GM12878 (cell line): ENCODE measurements at regions of chr19 and their contacts with region 1.

Region 1: DNA sequence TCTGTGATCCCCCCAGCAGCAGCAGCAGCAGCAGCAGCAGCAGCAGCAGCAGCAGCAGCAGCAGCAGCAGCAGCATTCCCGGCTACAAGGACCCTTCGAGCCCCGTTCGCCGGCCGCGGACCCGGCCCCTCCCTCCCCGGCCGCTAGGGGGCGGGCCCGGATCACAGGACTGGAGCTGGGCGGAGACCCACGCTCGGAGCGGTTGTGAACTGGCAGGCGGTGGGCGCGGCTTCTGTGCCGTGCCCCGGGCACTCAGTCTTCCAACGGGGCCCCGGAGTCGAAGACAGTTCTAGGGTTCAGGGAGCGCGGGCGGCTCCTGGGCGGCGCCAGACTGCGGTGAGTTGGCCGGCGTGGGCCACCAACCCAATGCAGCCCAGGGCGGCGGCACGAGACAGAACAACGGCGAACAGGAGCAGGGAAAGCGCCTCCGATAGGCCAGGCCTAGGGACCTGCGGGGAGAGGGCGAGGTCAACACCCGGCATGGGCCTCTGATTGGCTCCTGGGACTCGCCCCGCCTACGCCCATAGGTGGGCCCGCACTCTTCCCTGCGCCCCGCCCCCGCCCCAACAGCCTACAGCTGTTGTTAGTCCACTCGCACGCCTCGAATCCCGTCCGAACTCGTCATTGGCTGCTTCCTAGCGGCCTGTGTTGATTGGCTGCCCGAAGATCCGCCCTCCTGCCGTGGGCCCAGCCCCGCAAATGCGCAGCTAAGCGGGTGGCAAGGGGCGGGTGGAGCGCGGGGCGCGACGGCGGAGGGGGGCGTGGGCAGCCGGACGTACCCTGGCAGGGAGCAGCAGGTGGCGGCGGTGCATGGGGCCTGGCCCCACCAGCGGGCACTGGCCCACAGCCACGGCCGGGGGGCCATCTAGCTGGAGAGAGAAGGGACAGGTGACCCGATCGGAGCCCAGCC is 1.4 kb upstream of the SIX5 start:
- DNase-seq: peak; percentile 76
- ATAC-seq: peak; percentile 82
- H3K4me3 ChIP-seq: peak overlapping the region; percentile 78
- H3K27ac ChIP-seq: peak overlapping the region; percentile 67; the same call in 1 of the 2 replicates
- H3K4me1 ChIP-seq: peaks cover 4% of the 10 kb centered on the region
- H3K27me3 ChIP-seq: no peaks in the 10 kb centered on the region
- CTCF ChIP-seq: peak; percentile 86 to 95 (median 94)
- EP300 ChIP-seq: no peak
- POLR2A ChIP-seq: peak; percentile 65; the same call in 1 of the 2 replicates
- RAD21 ChIP-seq: peak; percentile 74

Region 2: GRCh38 chr19:45692187-45693105 is 78.0 kb before region 1 on chr19 and contains the start of gene QPCTL:
- CTCF ChIA-PET with region 1: interaction called, 34 read pairs
- POLR2A ChIA-PET with region 1: interaction called, 28 read pairs
- RAD21 ChIA-PET with region 1: interaction called, 41 read pairs
- SMC1A ChIA-PET with region 1: interaction called, 3 read pairs
- in situ Hi-C with region 1: no loop called
- intact Hi-C with region 1: loop called (anchors 5 kb)
- DNase-seq: peak; percentile 100
- ATAC-seq: peak; percentile 93
- H3K4me3 ChIP-seq: peak within 1 kb of the TSS; percentile 76
- H3K27ac ChIP-seq: peak within 1 kb of the TSS; percentile 82
- H3K4me1 ChIP-seq: peaks cover 10% of the 10 kb centered on the region
- H3K27me3 ChIP-seq: no peaks in the 10 kb centered on the region
- CTCF ChIP-seq: no peak
- EP300 ChIP-seq: peak; percentile 13 to 31; a peak in 1 of 4 replicates
- POLR2A ChIP-seq: peak; percentile 93
- RAD21 ChIP-seq: no peak
- polyA plus RNA-seq, gene QPCTL: 1.1 to 1.7 TPM

Region 3: GRCh38 chr19:45717166-45717982 is 53.1 kb before region 1 on chr19:
- CTCF ChIA-PET with region 1: interaction called, 21 read pairs
- POLR2A ChIA-PET with region 1: interaction called, 22 read pairs
- RAD21 ChIA-PET with region 1: interaction called, 25 read pairs
- SMC1A ChIA-PET with region 1: interaction called, 17 read pairs
- in situ Hi-C with region 1: no loop called
- intact Hi-C with region 1: no loop called
- DNase-seq: peak; percentile 99
- ATAC-seq: peak; percentile 99
- H3K4me3 ChIP-seq: peak overlapping the region; percentile 95
- H3K27ac ChIP-seq: peak overlapping the region; percentile 97
- H3K4me1 ChIP-seq: peaks cover 13% of the 10 kb centered on the region
- H3K27me3 ChIP-seq: no peaks in the 10 kb centered on the region
- CTCF ChIP-seq: peak; percentile 21 to 31 (median 25); a peak in 4 of 6 replicates
- EP300 ChIP-seq: peak in 1 of 2 experiments; percentile 51; a peak in 2 of 4 replicates
- POLR2A ChIP-seq: peak; percentile 70
- RAD21 ChIP-seq: no peak

Region 4: DNA sequence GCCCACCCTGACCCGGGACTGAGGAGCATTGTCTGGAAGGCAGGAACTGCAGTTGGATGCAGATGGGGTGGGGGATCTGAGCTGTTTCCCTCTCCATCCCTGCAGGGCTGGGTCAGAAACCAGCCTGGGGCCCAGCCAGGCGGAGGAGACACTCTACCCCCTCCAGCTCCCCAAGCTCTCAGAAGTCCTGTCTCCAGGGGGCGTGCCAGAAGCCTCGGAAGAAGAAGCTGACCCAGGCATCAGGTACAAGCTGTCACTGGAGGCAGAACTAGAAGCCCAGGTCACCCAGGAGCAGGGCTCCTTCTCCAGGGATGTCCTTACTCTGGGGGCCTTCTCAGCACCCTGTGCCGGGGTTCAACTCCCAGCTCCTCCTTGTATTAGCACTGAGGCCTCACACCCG is 16.9 kb before region 1 on chr19:
- CTCF ChIA-PET with region 1: interaction called, 17 read pairs
- POLR2A ChIA-PET with region 1: interaction called, 7 read pairs
- RAD21 ChIA-PET with region 1: interaction called, 9 read pairs
- SMC1A ChIA-PET with region 1: interaction called, 4 read pairs
- in situ Hi-C with region 1: no loop called
- intact Hi-C with region 1: no loop called
- DNase-seq: no peak
- ATAC-seq: peak; percentile 75
- H3K4me3 ChIP-seq: no peak overlapping the region
- H3K27ac ChIP-seq: no peak overlapping the region
- H3K4me1 ChIP-seq: no peaks in the 10 kb centered on the region
- H3K27me3 ChIP-seq: no peaks in the 10 kb centered on the region
- CTCF ChIP-seq: 0 out of 6 replicates have a peak, but pooled peaks of 2 of the 3 experiments have one; percentile 8 to 11
- EP300 ChIP-seq: no peak
- POLR2A ChIP-seq: no peak
- RAD21 ChIP-seq: no peak

Region 5: DNA sequence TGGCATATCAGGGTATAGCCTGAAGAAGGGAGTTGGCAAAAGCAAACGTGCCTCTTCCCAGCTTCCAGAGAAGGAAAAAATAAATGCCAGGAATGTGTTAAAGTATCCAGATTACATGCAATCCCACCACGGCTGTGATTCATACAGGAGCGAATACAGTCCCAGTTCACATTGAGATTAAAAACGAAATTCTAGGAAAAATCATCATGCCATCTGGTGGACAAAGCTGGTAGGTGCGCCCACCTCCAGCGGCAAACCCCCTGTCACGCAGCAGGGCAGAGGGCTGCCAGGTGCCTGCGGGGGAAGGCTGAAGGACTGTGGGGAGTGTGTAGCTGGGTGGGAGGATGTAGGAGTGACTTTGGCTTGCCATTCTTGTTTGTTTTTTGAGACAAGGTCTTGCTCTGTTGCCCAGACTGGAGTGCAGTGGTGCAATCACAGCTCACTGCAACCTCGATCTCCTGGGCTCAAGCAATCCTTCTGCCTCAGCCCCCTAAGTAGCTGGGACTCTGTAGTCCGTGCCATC is 28.6 kb after region 1 on chr19:
- CTCF ChIA-PET with region 1: interaction called, 110 read pairs
- POLR2A ChIA-PET with region 1: interaction called, 9 read pairs
- RAD21 ChIA-PET with region 1: interaction called, 63 read pairs
- SMC1A ChIA-PET with region 1: interaction called, 24 read pairs
- in situ Hi-C with region 1: no loop called
- intact Hi-C with region 1: loop called (anchors 2 kb)
- DNase-seq: peak; percentile 23
- ATAC-seq: peak; percentile 93
- H3K4me3 ChIP-seq: no peak overlapping the region
- H3K27ac ChIP-seq: no peak overlapping the region
- H3K4me1 ChIP-seq: peaks cover 8% of the 10 kb centered on the region
- H3K27me3 ChIP-seq: no peaks in the 10 kb centered on the region
- CTCF ChIP-seq: peak; percentile 75 to 91 (median 85)
- EP300 ChIP-seq: no peak
- POLR2A ChIP-seq: no peak
- RAD21 ChIP-seq: peak; percentile 39; the same call in 1 of the 2 replicates

Region 6: GRCh38 chr19:45862564-45863334 is 92.3 kb after region 1 on chr19 and contains the start of gene SYMPK:
- CTCF ChIA-PET with region 1: interaction called, 18 read pairs
- POLR2A ChIA-PET with region 1: interaction called, 12 read pairs
- RAD21 ChIA-PET with region 1: interaction called, 26 read pairs
- SMC1A ChIA-PET with region 1: interaction called, 5 read pairs
- in situ Hi-C with region 1: no loop called
- intact Hi-C with region 1: no loop called
- DNase-seq: peak; percentile 94
- ATAC-seq: peak; percentile 94
- H3K4me3 ChIP-seq: peak within 1 kb of the TSS; percentile 97
- H3K27ac ChIP-seq: peak within 1 kb of the TSS; percentile 93
- H3K4me1 ChIP-seq: peaks cover 5% of the 10 kb centered on the region
- H3K27me3 ChIP-seq: peaks cover 0 to 6% of the 10 kb centered on the region in 2 experiments; a peak in 2 of 4 replicates
- CTCF ChIP-seq: no peak
- EP300 ChIP-seq: 0 out of 4 replicates have a peak, but pooled peaks of 1 of the 2 experiments have one; percentile 10
- POLR2A ChIP-seq: peak; percentile 92
- RAD21 ChIP-seq: no peak
- polyA plus RNA-seq, gene SYMPK: 0.49 to 0.79 TPM

Region 7: DNA sequence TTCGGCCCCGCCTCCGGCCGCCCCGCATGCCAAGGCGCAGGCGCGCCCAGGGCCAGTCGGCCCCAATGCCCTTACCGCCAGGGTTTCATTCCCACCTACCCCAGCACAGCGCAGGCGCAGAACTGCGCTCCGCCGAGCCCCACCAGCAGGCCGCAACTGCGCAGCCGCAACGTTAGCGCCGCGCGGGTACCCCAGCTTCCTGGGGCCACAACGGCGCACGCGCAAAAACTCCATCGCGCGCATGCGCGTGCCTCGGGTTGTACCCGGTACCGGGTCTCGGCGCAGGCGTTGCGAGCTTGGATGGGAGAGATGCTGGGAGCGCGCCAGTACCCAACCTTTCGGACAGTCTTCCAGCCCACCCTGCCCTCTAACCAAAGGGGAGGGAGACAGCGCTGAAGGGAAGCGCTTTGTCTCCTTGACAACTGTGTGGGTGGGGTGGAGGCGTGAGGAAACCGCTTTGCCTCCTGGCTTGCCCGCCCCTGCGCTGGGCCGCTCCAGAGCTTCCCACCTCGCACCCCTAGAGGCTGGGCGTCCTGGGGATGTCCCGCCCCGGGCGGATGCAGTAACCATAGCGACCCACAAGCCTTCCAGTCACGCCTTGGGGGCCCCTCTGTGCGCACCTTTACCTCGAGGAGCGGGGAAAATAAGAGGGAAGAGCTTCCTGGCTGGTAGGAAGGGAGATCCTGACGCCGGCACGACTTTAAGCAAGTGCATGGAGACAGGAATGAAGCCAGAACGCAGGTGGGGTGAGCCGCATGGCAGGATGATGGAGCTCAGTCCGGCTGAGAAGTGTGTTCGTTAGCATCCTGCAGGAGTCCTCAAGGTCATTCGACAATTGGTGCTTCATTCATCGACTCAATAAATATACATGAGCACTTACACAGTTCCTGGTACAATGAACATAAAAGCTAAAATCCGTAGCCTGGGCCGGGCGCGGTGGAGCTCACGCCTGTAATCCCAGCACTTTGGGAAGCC is 132.5 kb after region 1 on chr19:
- CTCF ChIA-PET with region 1: interaction called, 4 read pairs
- POLR2A ChIA-PET with region 1: interaction called, 4 read pairs
- RAD21 ChIA-PET with region 1: interaction called, 12 read pairs
- SMC1A ChIA-PET with region 1: no interaction called
- in situ Hi-C with region 1: no loop called
- intact Hi-C with region 1: no loop called
- DNase-seq: peak; percentile 96
- ATAC-seq: peak; percentile 92
- H3K4me3 ChIP-seq: peak overlapping the region; percentile 98
- H3K27ac ChIP-seq: peak overlapping the region; percentile 27; the same call in 1 of the 2 replicates
- H3K4me1 ChIP-seq: peaks cover 10% of the 10 kb centered on the region
- H3K27me3 ChIP-seq: no peaks in the 10 kb centered on the region
- CTCF ChIP-seq: no peak
- EP300 ChIP-seq: no peak
- POLR2A ChIP-seq: peak; percentile 84
- RAD21 ChIP-seq: no peak

Region 8: DNA sequence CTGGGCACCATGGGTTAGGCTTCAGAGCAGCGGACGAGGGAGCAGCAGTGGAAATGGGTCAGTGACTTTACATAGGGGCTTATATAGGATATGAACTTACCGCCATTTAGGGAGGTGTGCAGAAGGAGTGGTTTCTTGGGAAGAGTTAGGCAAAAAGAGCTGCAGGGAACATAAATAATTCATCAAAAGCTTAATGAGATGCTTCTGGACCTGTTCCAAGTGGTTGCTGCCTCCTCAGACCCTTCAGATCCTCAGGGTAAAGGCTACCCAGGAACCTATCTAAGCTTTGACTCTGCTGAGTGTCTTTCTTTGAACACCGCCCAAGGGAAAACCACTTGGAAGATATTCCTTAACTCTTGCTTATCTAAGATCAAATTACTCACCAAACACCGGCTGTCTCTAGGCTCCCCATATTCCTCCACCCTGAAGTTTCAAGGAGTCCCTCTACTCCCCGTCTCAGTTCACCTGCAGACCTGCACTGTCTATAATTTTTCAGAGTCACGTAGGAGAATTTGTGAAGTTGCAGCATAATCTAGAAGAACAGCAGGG is 270.6 kb after region 1 on chr19 and contains the start of gene IGFL4:
- CTCF ChIA-PET with region 1: no interaction called
- POLR2A ChIA-PET with region 1: no interaction called
- RAD21 ChIA-PET with region 1: no interaction called
- SMC1A ChIA-PET with region 1: no interaction called
- in situ Hi-C with region 1: no loop called
- intact Hi-C with region 1: no loop called
- DNase-seq: no peak
- ATAC-seq: no peak
- H3K4me3 ChIP-seq: no peak within 1 kb of the TSS
- H3K27ac ChIP-seq: no peak within 1 kb of the TSS
- H3K4me1 ChIP-seq: no peaks in the 10 kb centered on the region
- H3K27me3 ChIP-seq: peaks cover 3 to 5% of the 10 kb centered on the region in 2 experiments; a peak in 3 of 4 replicates
- CTCF ChIP-seq: no peak
- EP300 ChIP-seq: no peak
- POLR2A ChIP-seq: no peak
- RAD21 ChIP-seq: no peak
- polyA plus RNA-seq, gene IGFL4: not detected